CD8-positive, alpha-beta T cell (primary cell): ENCODE measurements at regions of chr9 and their contacts with region 1.

Region 1: DNA sequence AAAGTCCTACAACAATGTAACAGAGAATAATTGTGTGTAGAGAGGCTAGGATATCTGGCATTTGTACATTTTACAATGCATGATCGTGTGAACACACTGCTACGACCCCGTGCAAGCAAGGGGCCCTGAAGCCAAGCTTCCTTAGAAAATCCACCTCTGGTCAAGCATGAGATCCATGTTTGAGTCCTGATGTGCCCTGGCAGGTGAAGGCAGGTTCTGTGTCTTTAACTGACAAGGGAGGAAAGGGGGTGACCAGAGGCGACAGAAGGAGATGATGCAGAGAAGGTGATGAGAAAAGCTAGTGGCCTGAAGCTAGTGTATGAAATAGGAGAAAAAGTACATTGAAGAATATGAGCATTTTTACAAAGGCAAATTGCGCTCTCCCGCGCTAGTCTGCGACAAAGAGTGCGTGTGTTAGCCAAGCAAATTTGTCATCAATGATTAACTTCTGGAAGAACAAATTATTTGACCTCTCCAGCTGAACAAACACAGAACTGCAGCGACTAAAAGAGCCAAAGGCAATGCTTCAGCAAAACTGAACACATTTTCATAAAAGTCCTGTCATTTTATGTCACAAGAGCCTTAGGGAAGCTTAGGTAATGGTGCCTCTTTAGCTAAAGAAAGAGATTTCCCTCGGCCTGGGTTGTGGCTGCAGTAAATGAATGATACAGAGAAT is 101.7 kb upstream of the DAPK1 start:
- DNase-seq: no peak
- ATAC-seq: no peak
- H3K4me3 ChIP-seq: no peak overlapping the region
- H3K4me3 Mint-ChIP-seq: no peak overlapping the region
- H3K27ac ChIP-seq: no peak overlapping the region
- H3K27ac Mint-ChIP-seq: no peak overlapping the region
- H3K4me1 ChIP-seq: no peaks in the 10 kb centered on the region
- H3K4me1 Mint-ChIP-seq: no peaks in the 10 kb centered on the region
- H3K27me3 ChIP-seq: peaks cover 0 to 3% of the 10 kb centered on the region in 2 experiments
- H3K27me3 Mint-ChIP-seq: no peaks in the 10 kb centered on the region
- CTCF ChIP-seq: no peak

Region 2: DNA sequence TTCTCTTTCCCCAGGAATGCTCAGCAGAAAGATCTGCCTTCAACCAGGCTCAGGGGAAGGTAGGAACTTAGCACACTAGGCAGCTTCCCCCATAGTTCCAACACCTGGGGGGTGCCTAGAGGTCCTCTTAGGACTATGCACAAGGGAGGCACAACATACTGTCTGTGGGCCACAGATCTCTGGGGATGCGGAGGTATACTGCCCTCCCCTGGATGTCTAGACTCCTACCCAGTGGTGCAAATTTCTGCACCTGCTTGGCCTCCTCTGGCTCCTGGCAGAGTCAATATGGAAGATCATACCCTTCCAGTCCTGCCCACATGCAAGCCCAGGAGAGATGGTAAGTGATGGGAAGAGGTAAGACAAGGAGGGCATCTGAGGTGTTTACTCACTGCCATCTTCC is 145.7 kb before region 1 on chr9:
- CTCF ChIA-PET with region 1: no interaction called
- POLR2A ChIA-PET with region 1: no interaction called
- intact Hi-C with region 1: no loop called
- DNase-seq: no peak
- ATAC-seq: no peak
- H3K4me3 ChIP-seq: no peak overlapping the region
- H3K4me3 Mint-ChIP-seq: no peak overlapping the region
- H3K27ac ChIP-seq: no peak overlapping the region
- H3K27ac Mint-ChIP-seq: no peak overlapping the region
- H3K4me1 ChIP-seq: no peaks in the 10 kb centered on the region
- H3K4me1 Mint-ChIP-seq: no peaks in the 10 kb centered on the region
- H3K27me3 ChIP-seq: no peaks in the 10 kb centered on the region
- H3K27me3 Mint-ChIP-seq: peaks cover 6% of the 10 kb centered on the region
- CTCF ChIP-seq: no peak

Region 3: DNA sequence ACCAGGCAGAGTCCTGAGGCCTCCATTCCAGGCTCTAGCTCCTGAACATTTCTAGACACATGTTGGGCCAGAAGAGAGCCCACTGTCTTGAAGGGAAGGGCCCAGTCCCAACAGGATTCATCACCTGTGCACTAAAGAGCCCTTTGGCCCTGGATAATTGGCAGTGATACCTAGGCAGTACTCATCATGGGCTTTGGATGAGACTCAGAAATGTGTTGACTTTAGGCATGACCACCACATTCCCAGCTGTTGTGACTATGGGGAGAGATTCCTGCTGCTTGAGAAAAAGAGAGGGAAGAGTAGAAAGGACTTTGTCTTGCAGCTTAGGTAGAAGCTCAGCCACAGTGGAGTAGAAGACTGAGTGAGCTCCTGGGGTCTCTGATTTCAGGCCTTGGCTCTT is 36.7 kb before region 1 on chr9:
- CTCF ChIA-PET with region 1: no interaction called
- POLR2A ChIA-PET with region 1: no interaction called
- intact Hi-C with region 1: loop called in 1 of 2 experiments (anchors 1 kb)
- DNase-seq: no peak
- ATAC-seq: no peak
- H3K4me3 ChIP-seq: no peak overlapping the region
- H3K4me3 Mint-ChIP-seq: no peak overlapping the region
- H3K27ac ChIP-seq: no peak overlapping the region
- H3K27ac Mint-ChIP-seq: no peak overlapping the region
- H3K4me1 ChIP-seq: no peaks in the 10 kb centered on the region
- H3K4me1 Mint-ChIP-seq: no peaks in the 10 kb centered on the region
- H3K27me3 ChIP-seq: no peaks in the 10 kb centered on the region
- H3K27me3 Mint-ChIP-seq: peaks cover 10% of the 10 kb centered on the region
- CTCF ChIP-seq: no peak

Region 4: DNA sequence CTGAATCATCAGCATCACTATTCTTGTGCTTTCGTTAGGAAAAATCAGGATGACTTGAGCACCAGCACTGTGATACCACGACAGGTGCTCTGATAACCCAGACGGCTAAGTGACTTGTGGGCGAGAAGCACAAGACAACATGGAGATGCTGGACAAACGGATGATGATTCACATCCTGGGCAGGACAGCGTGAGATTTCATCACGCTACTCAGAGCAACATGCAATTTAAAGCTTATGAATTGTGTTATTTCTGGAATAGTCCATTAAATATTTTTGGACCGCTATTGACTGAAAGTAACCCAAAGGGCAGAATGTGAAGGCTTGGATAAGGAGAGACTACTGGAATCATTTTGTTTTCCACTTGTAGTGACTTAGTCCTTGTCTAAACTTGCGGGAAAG is 13.0 kb before region 1 on chr9:
- CTCF ChIA-PET with region 1: no interaction called
- POLR2A ChIA-PET with region 1: no interaction called
- intact Hi-C with region 1: no loop called
- DNase-seq: peak in 1 of 9 experiments; percentile 3
- ATAC-seq: no peak
- H3K4me3 ChIP-seq: no peak overlapping the region
- H3K4me3 Mint-ChIP-seq: no peak overlapping the region
- H3K27ac ChIP-seq: no peak overlapping the region
- H3K27ac Mint-ChIP-seq: no peak overlapping the region
- H3K4me1 ChIP-seq: no peaks in the 10 kb centered on the region
- H3K4me1 Mint-ChIP-seq: no peaks in the 10 kb centered on the region
- H3K27me3 ChIP-seq: no peaks in the 10 kb centered on the region
- H3K27me3 Mint-ChIP-seq: peaks cover 2% of the 10 kb centered on the region
- CTCF ChIP-seq: no peak

Region 5: GRCh38 chr9:88056876-88057275 is 660.9 kb after region 1 on chr9:
- CTCF ChIA-PET with region 1: no interaction called
- POLR2A ChIA-PET with region 1: no interaction called
- intact Hi-C with region 1: no loop called
- DNase-seq: no peak
- ATAC-seq: no peak
- H3K4me3 ChIP-seq: no peak overlapping the region
- H3K4me3 Mint-ChIP-seq: no peak overlapping the region
- H3K27ac ChIP-seq: no peak overlapping the region
- H3K27ac Mint-ChIP-seq: no peak overlapping the region
- H3K4me1 ChIP-seq: no peaks in the 10 kb centered on the region
- H3K4me1 Mint-ChIP-seq: no peaks in the 10 kb centered on the region
- H3K27me3 ChIP-seq: no peaks in the 10 kb centered on the region
- H3K27me3 Mint-ChIP-seq: peaks cover 6% of the 10 kb centered on the region
- CTCF ChIP-seq: no peak